Panc1 (cell line): ENCODE measurements at regions of chr15 and their contacts with region 1.

Region 1: GRCh38 chr15:59594493-59594942 is 17.1 kb upstream of the GCNT3 start:
- DNase-seq: peak; percentile 57
- ATAC-seq: peak; percentile 77
- H3K4me3 ChIP-seq: no peak overlapping the region
- H3K27ac ChIP-seq: no peak overlapping the region
- H3K4me1 ChIP-seq: no peaks in the 10 kb centered on the region
- H3K27me3 ChIP-seq: no peaks in the 10 kb centered on the region
- CTCF ChIP-seq: no peak

Region 2: DNA sequence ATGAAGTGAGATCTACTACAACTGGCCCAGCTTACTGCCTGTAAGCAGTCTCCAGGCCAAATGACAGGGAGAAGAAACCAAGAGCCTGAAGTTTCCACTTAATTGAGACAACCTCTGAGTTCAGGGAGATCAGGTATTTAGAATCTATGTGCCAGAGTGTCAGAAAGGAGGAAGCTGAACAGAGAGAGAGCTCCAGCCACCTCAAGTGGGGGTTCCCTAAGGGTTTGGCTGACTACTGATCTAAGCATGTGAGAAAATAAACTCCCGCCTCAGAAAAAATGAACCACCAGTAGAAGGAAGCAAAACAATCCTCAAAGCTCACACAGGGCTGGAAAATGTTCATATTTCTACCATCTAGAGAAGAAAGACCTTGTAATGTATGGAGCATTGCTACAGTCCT is 870.1 kb before region 1 on chr15:
- CTCF ChIA-PET with region 1: no interaction called
- POLR2A ChIA-PET with region 1: interaction called, 11 read pairs
- in situ Hi-C with region 1: no loop called
- intact Hi-C with region 1: no loop called
- DNase-seq: no peak
- ATAC-seq: no peak
- H3K4me3 ChIP-seq: no peak overlapping the region
- H3K27ac ChIP-seq: no peak overlapping the region
- H3K4me1 ChIP-seq: no peaks in the 10 kb centered on the region
- H3K27me3 ChIP-seq: no peaks in the 10 kb centered on the region
- CTCF ChIP-seq: no peak

Region 3: GRCh38 chr15:58909616-58910015 is 684.9 kb before region 1 on chr15:
- CTCF ChIA-PET with region 1: no interaction called
- POLR2A ChIA-PET with region 1: interaction called, 31 read pairs
- in situ Hi-C with region 1: no loop called
- intact Hi-C with region 1: no loop called
- DNase-seq: no peak
- ATAC-seq: 0 out of 2 replicates have a peak, but pooled peaks have one; percentile 48
- H3K4me3 ChIP-seq: no peak overlapping the region
- H3K27ac ChIP-seq: no peak overlapping the region
- H3K4me1 ChIP-seq: no peaks in the 10 kb centered on the region
- H3K27me3 ChIP-seq: no peaks in the 10 kb centered on the region
- CTCF ChIP-seq: no peak

Region 4: GRCh38 chr15:59528965-59529402 is 65.5 kb before region 1 on chr15:
- CTCF ChIA-PET with region 1: interaction called, 3 read pairs
- POLR2A ChIA-PET with region 1: interaction called, 15 read pairs
- in situ Hi-C with region 1: no loop called
- intact Hi-C with region 1: no loop called
- DNase-seq: peak; percentile 85
- ATAC-seq: peak; percentile 98
- H3K4me3 ChIP-seq: no peak overlapping the region
- H3K27ac ChIP-seq: no peak overlapping the region
- H3K4me1 ChIP-seq: no peaks in the 10 kb centered on the region
- H3K27me3 ChIP-seq: no peaks in the 10 kb centered on the region
- CTCF ChIP-seq: peak; percentile 84

Region 5: GRCh38 chr15:59656897-59657634 is 62.5 kb after region 1 on chr15 and contains the start of gene GTF2A2:
- CTCF ChIA-PET with region 1: no interaction called
- POLR2A ChIA-PET with region 1: interaction called, 12 read pairs
- in situ Hi-C with region 1: no loop called
- intact Hi-C with region 1: no loop called
- DNase-seq: peak; percentile 71
- ATAC-seq: peak; percentile 100
- H3K4me3 ChIP-seq: peak within 1 kb of the TSS; percentile 93 to 94
- H3K27ac ChIP-seq: peak within 1 kb of the TSS; percentile 95
- H3K4me1 ChIP-seq: peaks cover 10% of the 10 kb centered on the region; the same call in 1 of the 2 replicates
- H3K27me3 ChIP-seq: no peaks in the 10 kb centered on the region
- CTCF ChIP-seq: no peak
- total RNA-seq, gene GTF2A2: 234 TPM

Region 6: GRCh38 chr15:59678620-59679019 is 84.1 kb after region 1 on chr15:
- CTCF ChIA-PET with region 1: no interaction called
- POLR2A ChIA-PET with region 1: no interaction called
- in situ Hi-C with region 1: no loop called
- intact Hi-C with region 1: no loop called
- DNase-seq: no peak
- ATAC-seq: no peak
- H3K4me3 ChIP-seq: no peak overlapping the region
- H3K27ac ChIP-seq: no peak overlapping the region
- H3K4me1 ChIP-seq: no peaks in the 10 kb centered on the region
- H3K27me3 ChIP-seq: no peaks in the 10 kb centered on the region
- CTCF ChIP-seq: no peak

Region 7: GRCh38 chr15:60006203-60006862 is 411.8 kb after region 1 on chr15:
- CTCF ChIA-PET with region 1: interaction called, 11 read pairs
- POLR2A ChIA-PET with region 1: no interaction called
- in situ Hi-C with region 1: no loop called
- intact Hi-C with region 1: no loop called
- DNase-seq: peak; percentile 10
- ATAC-seq: peak; percentile 72
- H3K4me3 ChIP-seq: peak overlapping the region; percentile 51 to 78
- H3K27ac ChIP-seq: no peak overlapping the region
- H3K4me1 ChIP-seq: peaks cover 10% of the 10 kb centered on the region; the same call in 1 of the 2 replicates
- H3K27me3 ChIP-seq: peaks cover 55% of the 10 kb centered on the region
- CTCF ChIP-seq: no peak